ENCODE measurements at regions of chr6 and their contacts with region 1.

Region 1: GRCh38 chr6:137389150-137389704 is 105.0 kb downstream of the OLIG3 start:
- DNase-seq: no peak
- H3K4me3 ChIP-seq: no peak overlapping the region
- H3K27ac ChIP-seq: no peak overlapping the region
- H3K4me1 ChIP-seq: no peaks in the 10 kb centered on the region
- H3K27me3 ChIP-seq: no peaks in the 10 kb centered on the region
- CTCF ChIP-seq: no peak
- EP300 ChIP-seq: no peak
- POLR2A ChIP-seq: no peak

Region 2: DNA sequence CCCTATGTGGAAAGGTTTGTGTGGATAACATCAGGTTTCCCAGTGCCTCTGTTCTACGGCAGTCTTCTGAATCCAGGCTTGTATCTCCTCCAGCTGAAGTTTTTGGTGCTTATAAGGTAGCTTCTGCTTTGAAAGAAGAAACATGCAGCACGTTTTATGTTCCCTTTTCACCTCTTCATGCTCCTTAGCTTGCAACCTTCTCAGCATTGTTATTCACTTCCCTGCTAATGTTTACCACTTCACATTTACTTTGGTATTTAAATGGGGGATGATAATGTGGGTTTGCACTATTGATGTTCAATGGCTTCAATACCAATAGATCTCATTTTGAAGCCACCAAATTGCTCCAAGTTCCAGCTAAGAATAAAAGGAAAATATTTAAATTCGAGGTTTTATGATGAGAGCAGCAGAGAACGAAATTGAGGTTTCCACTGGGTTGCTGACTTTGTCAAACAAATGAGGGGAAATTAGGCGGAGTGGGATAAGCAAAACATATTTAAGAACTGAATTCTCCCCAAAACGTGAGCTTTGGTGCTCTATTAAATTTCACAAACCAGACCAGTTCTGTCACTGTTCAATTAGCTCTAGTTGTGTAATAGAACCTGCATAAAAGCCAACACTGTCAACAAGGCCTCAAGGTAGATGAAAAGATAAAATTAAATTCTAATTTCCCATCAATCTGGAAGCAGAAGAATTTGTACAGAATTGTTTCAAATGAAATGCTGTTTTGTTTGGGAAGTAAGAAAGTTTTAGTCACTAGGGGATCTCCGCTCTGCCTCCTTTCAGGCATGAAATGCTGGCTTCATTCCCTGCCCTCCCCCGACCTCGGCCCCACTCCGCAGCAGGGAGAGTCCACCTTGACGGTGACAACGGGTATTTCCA is 217.2 kb before region 1 on chr6:
- intact Hi-C with region 1: no loop called
- DNase-seq: no peak
- H3K4me3 ChIP-seq: no peak overlapping the region
- H3K27ac ChIP-seq: no peak overlapping the region
- H3K4me1 ChIP-seq: no peaks in the 10 kb centered on the region
- H3K27me3 ChIP-seq: no peaks in the 10 kb centered on the region
- CTCF ChIP-seq: no peak
- EP300 ChIP-seq: no peak
- POLR2A ChIP-seq: no peak

Region 3: GRCh38 chr6:137443901-137444300 is 54.7 kb after region 1 on chr6:
- intact Hi-C with region 1: loop called in 1 of 4 experiments (anchors 5 kb)
- DNase-seq: no peak
- H3K4me3 ChIP-seq: no peak overlapping the region
- H3K27ac ChIP-seq: no peak overlapping the region
- H3K4me1 ChIP-seq: no peaks in the 10 kb centered on the region
- H3K27me3 ChIP-seq: no peaks in the 10 kb centered on the region
- CTCF ChIP-seq: no peak
- EP300 ChIP-seq: no peak
- POLR2A ChIP-seq: no peak

Measured in ovary (tissue), 10 donors.